ENCODE measurements at regions of chr9 and their contacts with region 1.

Region 1: GRCh38 chr9:123138163-123138562 is 104.7 kb downstream of the GPR21 start:
- DNase-seq: no peak
- ATAC-seq: no peak
- H3K4me3 ChIP-seq: no peak overlapping the region
- H3K4me3 Mint-ChIP-seq: no peak overlapping the region
- H3K27ac ChIP-seq: no peak overlapping the region
- H3K27ac Mint-ChIP-seq: no peak overlapping the region
- H3K4me1 ChIP-seq: no peaks in the 10 kb centered on the region
- H3K4me1 Mint-ChIP-seq: no peaks in the 10 kb centered on the region
- H3K27me3 ChIP-seq: no peaks in the 10 kb centered on the region
- H3K27me3 Mint-ChIP-seq: no peaks in the 10 kb centered on the region
- CTCF ChIP-seq: no peak

Region 2: DNA sequence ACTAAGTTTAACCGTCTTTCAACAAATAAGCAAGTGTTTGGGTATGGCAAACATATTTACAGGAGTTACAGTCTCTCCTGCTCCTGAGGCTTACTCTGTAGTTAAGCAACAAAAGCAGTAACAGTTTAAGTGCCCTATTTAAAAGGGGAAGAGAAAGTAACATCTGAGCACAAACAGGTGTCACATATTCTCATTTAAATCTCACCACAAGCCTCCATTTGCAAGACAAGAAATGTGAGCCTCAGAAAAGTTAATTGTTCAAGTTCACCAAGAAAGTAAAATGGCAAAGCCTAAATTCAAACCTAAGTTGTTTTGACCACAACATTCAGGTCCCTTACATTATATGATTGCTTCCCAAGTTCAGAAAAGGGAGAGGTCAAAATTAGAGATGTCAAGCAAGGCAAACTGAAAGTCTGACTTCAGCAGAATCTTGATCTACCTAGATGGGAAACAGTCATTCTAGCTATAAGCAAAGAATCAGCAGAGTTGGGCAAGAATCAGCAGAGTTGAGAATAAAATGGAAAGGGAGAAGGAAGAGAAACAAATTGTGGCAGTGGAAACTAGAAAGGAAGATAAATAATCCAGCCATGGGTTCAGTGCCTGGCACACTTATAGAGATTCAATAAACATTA is 36.8 kb after region 1 on chr9:
- CTCF ChIA-PET with region 1: no interaction called
- POLR2A ChIA-PET with region 1: no interaction called
- intact Hi-C with region 1: loop called in 1 of 2 experiments (anchors 5 kb)
- DNase-seq: peak in 1 of 9 experiments; percentile 5
- ATAC-seq: no peak
- H3K4me3 ChIP-seq: no peak overlapping the region
- H3K4me3 Mint-ChIP-seq: no peak overlapping the region
- H3K27ac ChIP-seq: no peak overlapping the region
- H3K27ac Mint-ChIP-seq: no peak overlapping the region
- H3K4me1 ChIP-seq: no peaks in the 10 kb centered on the region
- H3K4me1 Mint-ChIP-seq: peaks cover 6% of the 10 kb centered on the region
- H3K27me3 ChIP-seq: no peaks in the 10 kb centered on the region
- H3K27me3 Mint-ChIP-seq: no peaks in the 10 kb centered on the region
- CTCF ChIP-seq: no peak

Measured in CD8-positive, alpha-beta T cell (primary cell).